ENCODE measurements at regions of chr17 and their contacts with region 1.

Region 1: DNA sequence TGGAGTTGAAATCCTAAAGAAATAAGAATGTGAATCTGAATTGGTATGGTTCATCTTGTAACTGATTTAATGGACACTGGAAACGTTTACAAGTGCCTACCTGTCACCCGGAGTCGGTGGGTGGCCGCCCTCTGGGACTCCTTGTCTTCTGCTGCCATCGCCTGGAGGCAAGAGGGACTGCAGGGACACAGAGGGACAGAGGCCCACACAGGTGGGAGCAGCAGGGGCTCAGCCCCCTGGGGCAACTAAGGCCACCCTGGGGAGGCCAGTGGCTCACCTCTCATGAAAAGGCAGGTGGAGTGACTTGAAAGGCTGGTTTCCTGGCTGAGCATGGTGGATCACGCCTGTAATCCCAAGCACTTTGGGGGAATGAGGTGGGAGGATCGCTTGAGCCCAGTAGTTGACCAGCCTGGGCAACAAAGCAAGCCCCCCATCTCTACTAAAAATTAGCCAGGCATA is 23.2 kb downstream of the TMEM92 start:
- DNase-seq: peak; percentile 72 to 86 (median 83)
- H3K4me3 ChIP-seq: no peak overlapping the region
- H3K27ac ChIP-seq: no peak overlapping the region
- H3K4me1 ChIP-seq: peaks cover 3% of the 10 kb centered on the region
- H3K27me3 ChIP-seq: no peaks in the 10 kb centered on the region
- CTCF ChIP-seq: peak; percentile 91 to 98 (median 97)
- EP300 ChIP-seq: no peak
- POLR2A ChIP-seq: no peak

Region 2: GRCh38 chr17:50026901-50027630 is 270.4 kb before region 1 on chr17:
- intact Hi-C with region 1: loop called in 2 of 4 experiments (anchors 10 kb)
- DNase-seq: peak; percentile 70 to 92 (median 88)
- H3K4me3 ChIP-seq: peak overlapping the region; percentile 19
- H3K27ac ChIP-seq: no peak overlapping the region
- H3K4me1 ChIP-seq: peaks cover 8% of the 10 kb centered on the region
- H3K27me3 ChIP-seq: no peaks in the 10 kb centered on the region
- CTCF ChIP-seq: peak; percentile 84 to 97 (median 94)
- EP300 ChIP-seq: no peak
- POLR2A ChIP-seq: peak; percentile 23

Region 3: GRCh38 chr17:50094753-50095619 is 202.4 kb before region 1 on chr17 and contains the start of gene PDK2:
- intact Hi-C with region 1: loop called in 2 of 4 experiments (anchors 5 to 10 kb)
- DNase-seq: peak; percentile 96 to 98 (median 96)
- H3K4me3 ChIP-seq: peak within 1 kb of the TSS; percentile 98
- H3K27ac ChIP-seq: peak within 1 kb of the TSS; percentile 42 to 72
- H3K4me1 ChIP-seq: peaks cover 6% of the 10 kb centered on the region
- H3K27me3 ChIP-seq: no peaks in the 10 kb centered on the region
- CTCF ChIP-seq: no peak
- EP300 ChIP-seq: no peak
- POLR2A ChIP-seq: no peak
- total RNA-seq, gene PDK2: 36.5 to 83.2 (median 54.7) TPM

Region 4: DNA sequence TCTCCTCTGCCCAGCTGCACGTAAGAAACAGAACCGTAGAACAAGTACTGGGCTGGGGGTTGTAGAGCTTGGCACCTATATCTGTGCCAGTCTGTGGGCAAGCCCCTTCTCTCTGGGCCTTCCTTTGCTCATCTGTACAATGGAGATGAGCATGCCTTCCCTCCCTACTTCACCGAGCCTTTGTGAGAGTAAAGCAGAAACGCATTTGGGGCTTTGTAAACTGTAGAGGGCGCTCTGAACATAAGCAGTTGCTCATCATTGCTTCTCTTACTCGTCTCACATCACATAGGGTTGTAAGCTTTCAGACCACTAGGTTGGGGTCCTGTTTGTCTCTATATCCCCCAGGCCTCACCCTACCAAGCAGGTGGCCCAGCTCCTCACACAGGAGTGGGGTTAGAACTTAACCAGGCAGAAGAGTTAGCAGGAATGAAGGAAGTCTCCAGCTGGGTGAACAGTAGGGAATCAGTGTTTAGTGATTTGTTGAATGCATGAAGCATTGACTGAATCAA is 182.5 kb before region 1 on chr17:
- intact Hi-C with region 1: loop called in 1 of 4 experiments (anchors 10 kb)
- DNase-seq: no peak
- H3K4me3 ChIP-seq: no peak overlapping the region
- H3K27ac ChIP-seq: no peak overlapping the region
- H3K4me1 ChIP-seq: peaks cover 8% of the 10 kb centered on the region
- H3K27me3 ChIP-seq: no peaks in the 10 kb centered on the region
- CTCF ChIP-seq: peak in 1 of 3 donors; percentile 10
- EP300 ChIP-seq: no peak
- POLR2A ChIP-seq: no peak

Region 5: DNA sequence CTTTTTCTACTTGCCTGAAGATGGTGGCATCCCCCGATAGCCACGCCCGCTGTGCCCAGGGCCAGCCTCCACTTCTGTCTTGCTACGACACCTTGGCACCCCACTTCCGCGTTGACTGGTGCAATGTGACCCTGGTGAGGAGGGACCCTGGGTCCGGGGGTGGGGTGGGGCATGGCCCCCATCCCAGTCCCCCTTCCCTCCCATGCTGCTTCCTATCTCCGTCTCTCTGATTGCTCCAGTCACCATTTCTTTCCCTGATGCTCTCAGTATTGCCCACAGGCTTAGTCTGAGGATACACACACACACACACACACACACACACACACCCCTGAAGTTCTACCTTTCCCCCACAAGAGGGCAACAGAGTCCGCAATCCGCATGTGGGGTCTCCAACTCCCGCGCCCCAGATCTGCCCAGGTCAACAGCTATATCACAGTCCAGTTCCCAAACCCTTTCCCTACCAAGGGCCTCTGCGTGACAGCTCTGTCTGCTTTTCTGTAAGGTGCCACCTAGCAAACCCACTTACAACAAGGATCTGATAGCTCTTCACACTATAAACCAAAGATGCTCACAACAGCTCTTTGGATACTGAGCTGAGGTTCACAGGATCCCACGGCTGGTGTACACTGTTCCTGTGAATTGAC is 128.2 kb before region 1 on chr17:
- intact Hi-C with region 1: loop called in 3 of 4 experiments (anchors 1 to 5 kb)
- DNase-seq: peak in 3 of 5 donors; percentile 61 to 78 (median 72)
- H3K4me3 ChIP-seq: no peak overlapping the region
- H3K27ac ChIP-seq: no peak overlapping the region
- H3K4me1 ChIP-seq: peaks cover 5% of the 10 kb centered on the region
- H3K27me3 ChIP-seq: no peaks in the 10 kb centered on the region
- CTCF ChIP-seq: peak; percentile 32 to 98 (median 95)
- EP300 ChIP-seq: no peak
- POLR2A ChIP-seq: no peak

Region 6: GRCh38 chr17:50372758-50373556 is 75.5 kb after region 1 on chr17 and contains the starts of genes EME1 and MRPL27:
- intact Hi-C with region 1: no loop called
- DNase-seq: peak; percentile 73 to 83 (median 76)
- H3K4me3 ChIP-seq: peak within 1 kb of the TSS; percentile 94
- H3K27ac ChIP-seq: peak within 1 kb of the TSS; percentile 80 to 81
- H3K4me1 ChIP-seq: peaks cover 7% of the 10 kb centered on the region
- H3K27me3 ChIP-seq: no peaks in the 10 kb centered on the region
- CTCF ChIP-seq: no peak
- EP300 ChIP-seq: no peak
- POLR2A ChIP-seq: peak; percentile 76
- total RNA-seq, gene EME1: 0.46 to 1.3 (median 0.88) TPM
- total RNA-seq, gene MRPL27: 38.7 to 60.2 (median 47.7) TPM

Measured in ovary (tissue), 10 donors.